ENCODE measurements at regions of chr4 and their contacts with region 1.

Region 1: GRCh38 chr4:113278324-113278934 is 229.0 kb downstream of the ANK2 start:
- DNase-seq: peak in 7 of 9 donors; percentile 2 to 45 (median 16)
- ATAC-seq: peak; percentile 60
- H3K4me3 ChIP-seq: no peak overlapping the region
- H3K4me3 Mint-ChIP-seq: no peak overlapping the region
- H3K27ac ChIP-seq: no peak overlapping the region
- H3K27ac Mint-ChIP-seq: no peak overlapping the region
- H3K4me1 ChIP-seq: no peaks in the 10 kb centered on the region
- H3K4me1 Mint-ChIP-seq: no peaks in the 10 kb centered on the region
- H3K27me3 ChIP-seq: peaks cover 0 to 4% of the 10 kb centered on the region in 2 donors
- H3K27me3 Mint-ChIP-seq: peaks cover 11 to 21% (median 15%) of the 10 kb centered on the region in 5 donors

Region 2: GRCh38 chr4:113355550-113356371 is 77.3 kb after region 1 on chr4:
- CTCF ChIA-PET with region 1: no interaction called
- POLR2A ChIA-PET with region 1: no interaction called
- intact Hi-C with region 1: loop called in 1 of 2 experiments (anchors 2 kb)
- DNase-seq: peak in 8 of 9 donors; percentile 0 to 64 (median 17)
- ATAC-seq: peak; percentile 91
- H3K4me3 ChIP-seq: peak overlapping the region; percentile 34
- H3K4me3 Mint-ChIP-seq: peak overlapping the region; percentile 58 to 82 (median 71)
- H3K27ac ChIP-seq: no peak overlapping the region
- H3K27ac Mint-ChIP-seq: peak overlapping the region in 6 of 9 donors; percentile 14 to 90 (median 66)
- H3K4me1 ChIP-seq: peaks cover 7 to 13% of the 10 kb centered on the region in 2 donors
- H3K4me1 Mint-ChIP-seq: peaks cover 10 to 36% (median 20%) of the 10 kb centered on the region in 7 donors
- H3K27me3 ChIP-seq: no peaks in the 10 kb centered on the region
- H3K27me3 Mint-ChIP-seq: peaks cover 6 to 55% (median 18%) of the 10 kb centered on the region in 5 donors

Region 3: DNA sequence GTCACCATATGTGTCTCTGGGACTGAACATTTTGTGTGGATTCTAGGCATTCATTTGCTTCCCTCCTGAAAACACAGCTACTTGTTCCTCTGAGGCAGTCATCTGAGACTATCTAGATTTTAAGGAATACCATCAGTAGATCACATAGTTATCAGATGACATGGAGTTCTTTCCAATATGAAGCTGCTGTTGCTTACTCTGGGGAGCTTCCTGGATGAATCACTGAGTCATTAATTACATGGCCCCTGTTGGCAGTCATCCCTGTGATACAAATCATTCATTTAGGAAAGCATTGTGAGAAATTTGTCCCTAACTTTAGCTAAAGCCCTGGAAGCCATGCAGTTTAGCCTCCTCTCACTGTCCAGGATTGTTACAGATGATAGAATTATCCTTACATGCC is 799.2 kb after region 1 on chr4:
- CTCF ChIA-PET with region 1: no interaction called
- POLR2A ChIA-PET with region 1: no interaction called
- intact Hi-C with region 1: loop called in 1 of 2 experiments (anchors 5 kb)
- DNase-seq: no peak
- ATAC-seq: no peak
- H3K4me3 ChIP-seq: no peak overlapping the region
- H3K4me3 Mint-ChIP-seq: no peak overlapping the region
- H3K27ac ChIP-seq: no peak overlapping the region
- H3K27ac Mint-ChIP-seq: no peak overlapping the region
- H3K4me1 ChIP-seq: no peaks in the 10 kb centered on the region
- H3K4me1 Mint-ChIP-seq: no peaks in the 10 kb centered on the region
- H3K27me3 ChIP-seq: no peaks in the 10 kb centered on the region
- H3K27me3 Mint-ChIP-seq: peaks cover 0 to 22% (median 0%) of the 10 kb centered on the region in 5 donors

Region 4: DNA sequence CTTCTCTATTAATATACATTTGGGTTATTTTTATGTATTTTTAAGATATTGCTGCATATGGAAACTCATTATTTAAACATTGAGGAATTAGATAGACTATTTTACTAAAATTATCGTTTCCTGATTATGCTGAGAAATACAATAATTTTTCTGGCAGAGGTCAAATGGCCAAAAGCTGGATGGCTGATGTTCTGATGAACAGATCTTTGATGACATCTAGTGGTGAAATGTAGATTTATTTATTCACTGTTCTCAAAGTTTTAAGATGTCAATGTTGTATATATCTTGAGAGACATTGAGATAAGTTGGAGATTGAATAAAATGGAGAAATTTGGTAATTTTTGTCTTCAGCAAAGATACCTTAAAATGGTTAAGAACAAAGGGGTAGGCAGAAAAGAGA is 1416.3 kb after region 1 on chr4:
- CTCF ChIA-PET with region 1: no interaction called
- POLR2A ChIA-PET with region 1: no interaction called
- intact Hi-C with region 1: loop called (anchors 1 kb)
- DNase-seq: peak in 5 of 9 donors; percentile 1 to 17 (median 9)
- ATAC-seq: no peak
- H3K4me3 ChIP-seq: no peak overlapping the region
- H3K4me3 Mint-ChIP-seq: no peak overlapping the region
- H3K27ac ChIP-seq: no peak overlapping the region
- H3K27ac Mint-ChIP-seq: no peak overlapping the region
- H3K4me1 ChIP-seq: no peaks in the 10 kb centered on the region
- H3K4me1 Mint-ChIP-seq: peaks cover 0 to 6% (median 0%) of the 10 kb centered on the region in 7 donors
- H3K27me3 ChIP-seq: no peaks in the 10 kb centered on the region
- H3K27me3 Mint-ChIP-seq: peaks cover 0 to 16% (median 7%) of the 10 kb centered on the region in 5 donors

Measured in naive thymus-derived CD4-positive, alpha-beta T cell (primary cell).